ENCODE measurements at regions of chr20 and their contacts with region 1.

Region 1: DNA sequence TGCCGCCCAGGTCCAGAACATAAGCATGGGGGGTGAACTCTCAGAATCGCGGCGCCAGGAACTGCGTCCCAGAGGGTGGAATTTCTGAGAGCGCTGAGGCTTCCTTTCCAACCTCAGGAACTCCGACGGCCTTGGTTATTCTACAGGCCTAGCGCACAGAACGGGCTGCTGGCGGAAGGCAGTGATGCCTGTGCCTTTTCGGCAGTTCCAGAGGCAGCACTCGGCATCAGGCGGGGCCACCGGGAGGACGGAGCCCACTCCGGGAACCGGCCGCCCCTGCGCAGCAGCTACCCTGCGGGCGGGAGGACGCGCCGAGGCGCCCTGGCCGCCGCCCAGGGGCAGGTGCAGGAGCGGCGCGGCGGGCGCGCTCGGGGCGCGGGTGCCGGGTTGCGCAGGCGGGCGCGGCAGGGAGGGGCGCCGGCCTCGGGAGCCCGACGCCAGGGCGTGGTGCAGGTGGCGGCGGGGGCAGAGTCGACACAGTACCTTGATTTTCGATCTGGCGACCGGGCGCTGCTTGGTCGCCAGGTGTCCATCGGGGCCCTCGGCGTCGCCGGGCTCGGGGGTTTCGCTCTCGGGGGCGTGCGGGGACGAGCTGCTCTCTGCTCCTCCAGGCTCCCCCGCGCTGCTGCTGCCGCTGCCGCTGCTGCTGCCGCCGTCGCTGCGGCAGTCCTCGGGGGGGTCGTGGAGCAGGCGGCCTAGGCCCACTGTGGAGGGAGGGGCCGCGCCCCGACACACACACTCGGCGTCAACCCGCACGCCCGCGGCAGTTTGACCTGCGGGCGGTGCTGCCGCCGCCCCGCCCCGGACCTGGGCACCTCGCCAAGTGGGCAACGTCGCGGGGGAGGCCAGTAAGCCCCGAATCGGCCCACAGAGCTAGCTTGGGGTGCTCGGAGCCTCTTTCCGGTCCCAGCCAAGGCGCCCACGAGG is 1.3 kb downstream of the OVOL2 start:
- DNase-seq: no peak
- ATAC-seq: no peak
- H3K4me3 ChIP-seq: peak overlapping the region; percentile 12 to 48 (median 44)
- H3K27ac ChIP-seq: no peak overlapping the region
- H3K4me1 ChIP-seq: peaks cover 0 to 22% of the 10 kb centered on the region in 2 donors
- H3K27me3 ChIP-seq: peaks cover 56 to 74% (median 62%) of the 10 kb centered on the region in 3 donors
- CTCF ChIP-seq: no peak
- POLR2A ChIP-seq: no peak

Region 2: DNA sequence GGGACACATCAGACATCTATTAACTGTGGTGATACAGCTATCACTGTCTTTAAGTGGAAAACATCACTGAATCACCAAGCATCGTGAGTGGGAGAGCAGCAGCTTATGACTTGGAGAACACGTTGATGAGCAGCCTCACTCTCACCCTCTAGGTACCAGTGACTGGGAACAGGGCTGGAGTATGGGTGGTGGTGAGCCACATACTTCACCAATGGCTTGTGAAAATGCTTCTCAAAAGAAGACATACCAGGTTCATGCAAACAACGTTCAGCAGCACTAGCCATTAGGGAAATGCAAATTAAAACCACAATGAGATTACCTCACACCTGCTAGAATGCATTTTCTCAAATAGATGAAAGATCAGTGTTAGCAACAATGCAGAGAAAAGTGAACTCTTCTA is 113.1 kb before region 1 on chr20:
- in situ Hi-C with region 1: no loop called
- intact Hi-C with region 1: no loop called
- DNase-seq: no peak
- ATAC-seq: no peak
- H3K4me3 ChIP-seq: no peak overlapping the region
- H3K27ac ChIP-seq: no peak overlapping the region
- H3K4me1 ChIP-seq: peaks cover 10 to 27% of the 10 kb centered on the region in 2 donors
- H3K27me3 ChIP-seq: no peaks in the 10 kb centered on the region
- CTCF ChIP-seq: no peak
- POLR2A ChIP-seq: no peak

Region 3: GRCh38 chr20:18005231-18006109 is 51.0 kb before region 1 on chr20:
- in situ Hi-C with region 1: no loop called
- intact Hi-C with region 1: no loop called
- DNase-seq: no peak
- ATAC-seq: no peak
- H3K4me3 ChIP-seq: no peak overlapping the region
- H3K27ac ChIP-seq: peak overlapping the region in 2 of 4 donors; percentile 28 to 46
- H3K4me1 ChIP-seq: peaks cover 0 to 5% of the 10 kb centered on the region in 2 donors
- H3K27me3 ChIP-seq: no peaks in the 10 kb centered on the region
- CTCF ChIP-seq: no peak
- POLR2A ChIP-seq: no peak

Region 4: GRCh38 chr20:18164356-18164755 is 107.9 kb after region 1 on chr20:
- in situ Hi-C with region 1: loop called in 1 of 4 experiments (anchors 25 kb)
- intact Hi-C with region 1: no loop called
- DNase-seq: no peak
- ATAC-seq: no peak
- H3K4me3 ChIP-seq: no peak overlapping the region
- H3K27ac ChIP-seq: no peak overlapping the region
- H3K4me1 ChIP-seq: peaks cover 0 to 13% of the 10 kb centered on the region in 2 donors
- H3K27me3 ChIP-seq: no peaks in the 10 kb centered on the region
- CTCF ChIP-seq: no peak
- POLR2A ChIP-seq: no peak

Region 5: DNA sequence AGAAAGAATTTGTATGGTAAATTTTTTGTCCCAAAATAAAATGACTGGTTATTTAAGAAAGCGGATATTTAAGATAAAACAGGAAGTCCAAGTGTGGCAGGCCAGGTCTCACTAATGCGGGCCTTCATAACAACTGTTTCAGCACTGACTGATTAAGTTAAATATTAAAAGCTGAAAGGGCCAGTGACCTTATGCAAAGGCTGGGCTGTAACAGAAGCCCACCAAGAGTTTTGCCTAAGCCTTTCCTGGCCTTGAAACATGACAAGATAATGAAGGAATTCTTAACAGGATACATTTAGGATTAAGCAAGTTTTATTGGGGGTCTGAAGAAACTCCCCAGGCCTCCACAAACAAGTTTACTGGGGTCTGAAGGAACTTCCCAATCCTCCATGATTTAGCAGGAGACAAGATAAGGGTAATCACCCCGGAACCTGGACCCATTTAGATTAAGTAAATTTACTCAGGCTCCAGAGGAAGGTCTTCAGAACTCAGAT is 268.2 kb after region 1 on chr20:
- in situ Hi-C with region 1: no loop called
- intact Hi-C with region 1: no loop called
- DNase-seq: no peak
- ATAC-seq: no peak
- H3K4me3 ChIP-seq: no peak overlapping the region
- H3K27ac ChIP-seq: no peak overlapping the region
- H3K4me1 ChIP-seq: no peaks in the 10 kb centered on the region
- H3K27me3 ChIP-seq: no peaks in the 10 kb centered on the region
- CTCF ChIP-seq: no peak
- POLR2A ChIP-seq: no peak

Measured in gastrocnemius medialis (tissue), 4 donors.